Caco-2 (cell line): ENCODE measurements at regions of chr14 and their contacts with region 1.

Region 1: DNA sequence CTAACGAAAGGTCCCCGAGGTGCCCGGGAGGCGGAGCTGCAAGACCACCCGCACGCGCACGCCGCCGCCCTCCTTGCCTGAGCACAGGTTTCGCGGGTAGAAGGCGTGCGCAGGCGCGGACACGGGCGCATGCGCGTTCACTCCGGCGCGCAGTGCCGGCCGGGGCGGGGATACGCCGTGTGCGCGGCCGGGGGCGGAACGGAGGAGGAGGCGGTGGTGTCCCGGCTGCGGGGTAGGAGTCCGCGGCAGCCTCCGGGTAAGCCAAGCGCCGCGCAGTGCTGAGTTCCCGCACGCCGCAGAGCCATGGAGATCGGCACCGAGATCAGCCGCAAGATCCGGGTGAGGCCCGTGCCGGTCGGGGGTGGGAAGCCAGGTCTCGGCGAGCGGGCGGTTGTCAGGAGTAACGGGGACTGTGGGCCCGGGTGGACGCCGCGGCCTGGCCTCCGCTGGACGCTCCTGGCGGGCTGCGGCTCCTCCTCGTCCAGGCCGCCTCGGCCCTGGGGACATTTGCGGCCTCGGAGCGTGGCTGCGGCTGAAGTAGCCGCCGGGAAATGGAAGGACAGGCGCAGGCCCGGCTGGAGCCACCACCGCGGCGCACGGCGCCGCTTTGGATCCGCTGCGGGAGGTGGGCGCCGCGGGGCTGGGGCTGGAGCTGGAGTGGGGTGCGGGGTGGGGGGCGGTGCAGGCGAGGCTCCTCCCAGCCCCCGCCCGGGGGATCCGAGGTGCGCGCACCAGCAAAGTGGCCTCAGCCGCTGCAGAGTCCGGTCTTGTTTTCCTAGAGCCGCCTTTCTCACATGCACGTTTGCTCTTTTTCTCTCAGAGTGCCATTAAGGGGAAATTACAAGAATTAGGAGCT is at the start of gene ZC3H14:
- DNase-seq: peak; percentile 87 to 93
- H3K4me3 ChIP-seq: peak within 1 kb of the TSS; percentile 99
- H3K4me3 Mint-ChIP-seq: peak within 1 kb of the TSS; percentile 73
- H3K27ac Mint-ChIP-seq: peak within 1 kb of the TSS; percentile 44
- H3K4me1 ChIP-seq: peaks cover 18% of the 10 kb centered on the region; the same call in 1 of the 2 replicates
- H3K4me1 Mint-ChIP-seq: peaks cover 7% of the 10 kb centered on the region
- H3K27me3 ChIP-seq: no peaks in the 10 kb centered on the region
- H3K27me3 Mint-ChIP-seq: no peaks in the 10 kb centered on the region
- CTCF ChIP-seq: no peak
- total RNA-seq, gene ZC3H14: 77.1 and 77.6 TPM in 2 replicates

Region 2: GRCh38 chr14:88385345-88386101 is 177.5 kb before region 1 on chr14 and contains the start of gene SPATA7:
- CTCF ChIA-PET with region 1: interaction called, 4 read pairs
- POLR2A ChIA-PET with region 1: no interaction called
- intact Hi-C with region 1: loop called (anchors 2 kb)
- DNase-seq: peak; percentile 89 to 92
- H3K4me3 ChIP-seq: peak within 1 kb of the TSS; percentile 94
- H3K4me3 Mint-ChIP-seq: peak within 1 kb of the TSS; percentile 98
- H3K27ac Mint-ChIP-seq: peak within 1 kb of the TSS; percentile 89
- H3K4me1 ChIP-seq: no peaks in the 10 kb centered on the region
- H3K4me1 Mint-ChIP-seq: no peaks in the 10 kb centered on the region
- H3K27me3 ChIP-seq: no peaks in the 10 kb centered on the region
- H3K27me3 Mint-ChIP-seq: peaks cover 3% of the 10 kb centered on the region
- CTCF ChIP-seq: no peak
- total RNA-seq, gene SPATA7: 8.2 and 8.7 TPM in 2 replicates

Region 3: GRCh38 chr14:88470542-88471440 is 92.3 kb before region 1 on chr14:
- CTCF ChIA-PET with region 1: interaction called, 8 read pairs
- POLR2A ChIA-PET with region 1: no interaction called
- intact Hi-C with region 1: loop called (anchors 5 kb)
- DNase-seq: no peak
- H3K4me3 ChIP-seq: no peak overlapping the region
- H3K4me3 Mint-ChIP-seq: no peak overlapping the region
- H3K27ac Mint-ChIP-seq: no peak overlapping the region
- H3K4me1 ChIP-seq: peaks cover 23% of the 10 kb centered on the region
- H3K4me1 Mint-ChIP-seq: peaks cover 12% of the 10 kb centered on the region
- H3K27me3 ChIP-seq: no peaks in the 10 kb centered on the region
- H3K27me3 Mint-ChIP-seq: no peaks in the 10 kb centered on the region
- CTCF ChIP-seq: no peak

Region 4: GRCh38 chr14:88492272-88493089 is 70.6 kb before region 1 on chr14:
- CTCF ChIA-PET with region 1: interaction called, 11 read pairs
- POLR2A ChIA-PET with region 1: no interaction called
- intact Hi-C with region 1: loop called (anchors 1 kb)
- DNase-seq: peak; percentile 73 to 88
- H3K4me3 ChIP-seq: no peak overlapping the region
- H3K4me3 Mint-ChIP-seq: no peak overlapping the region
- H3K27ac Mint-ChIP-seq: peak overlapping the region; percentile 7
- H3K4me1 ChIP-seq: peaks cover 14% of the 10 kb centered on the region; the same call in 1 of the 2 replicates
- H3K4me1 Mint-ChIP-seq: peaks cover 19% of the 10 kb centered on the region
- H3K27me3 ChIP-seq: no peaks in the 10 kb centered on the region
- H3K27me3 Mint-ChIP-seq: no peaks in the 10 kb centered on the region
- CTCF ChIP-seq: peak; percentile 79 to 88

Region 5: GRCh38 chr14:88502740-88503139 is 60.3 kb before region 1 on chr14:
- CTCF ChIA-PET with region 1: no interaction called
- POLR2A ChIA-PET with region 1: no interaction called
- intact Hi-C with region 1: no loop called
- DNase-seq: no peak
- H3K4me3 ChIP-seq: no peak overlapping the region
- H3K4me3 Mint-ChIP-seq: no peak overlapping the region
- H3K27ac Mint-ChIP-seq: no peak overlapping the region
- H3K4me1 ChIP-seq: no peaks in the 10 kb centered on the region
- H3K4me1 Mint-ChIP-seq: no peaks in the 10 kb centered on the region
- H3K27me3 ChIP-seq: no peaks in the 10 kb centered on the region
- H3K27me3 Mint-ChIP-seq: no peaks in the 10 kb centered on the region
- CTCF ChIP-seq: no peak

Region 6: GRCh38 chr14:88599761-88600439 is 36.8 kb after region 1 on chr14:
- CTCF ChIA-PET with region 1: no interaction called
- POLR2A ChIA-PET with region 1: no interaction called
- intact Hi-C with region 1: no loop called
- DNase-seq: no peak
- H3K4me3 ChIP-seq: no peak overlapping the region
- H3K4me3 Mint-ChIP-seq: no peak overlapping the region
- H3K27ac Mint-ChIP-seq: no peak overlapping the region
- H3K4me1 ChIP-seq: no peaks in the 10 kb centered on the region
- H3K4me1 Mint-ChIP-seq: peaks cover 11% of the 10 kb centered on the region
- H3K27me3 ChIP-seq: no peaks in the 10 kb centered on the region
- H3K27me3 Mint-ChIP-seq: no peaks in the 10 kb centered on the region
- CTCF ChIP-seq: no peak

Region 7: GRCh38 chr14:89085737-89086382 is 522.8 kb after region 1 on chr14:
- CTCF ChIA-PET with region 1: no interaction called
- POLR2A ChIA-PET with region 1: no interaction called
- intact Hi-C with region 1: no loop called
- DNase-seq: no peak
- H3K4me3 ChIP-seq: no peak overlapping the region
- H3K4me3 Mint-ChIP-seq: no peak overlapping the region
- H3K27ac Mint-ChIP-seq: no peak overlapping the region
- H3K4me1 ChIP-seq: no peaks in the 10 kb centered on the region
- H3K4me1 Mint-ChIP-seq: peaks cover 7% of the 10 kb centered on the region
- H3K27me3 ChIP-seq: no peaks in the 10 kb centered on the region
- H3K27me3 Mint-ChIP-seq: no peaks in the 10 kb centered on the region
- CTCF ChIP-seq: no peak